ENCODE measurements at regions of chr4 and their contacts with region 1.

Region 1: GRCh38 chr4:142846729-142847596 is 862 bp upstream of the INPP4B start:
- DNase-seq: peak; percentile 60
- H3K4me3 Mint-ChIP-seq: peak overlapping the region; percentile 89
- H3K27ac Mint-ChIP-seq: peak overlapping the region; percentile 80
- H3K4me1 Mint-ChIP-seq: peaks cover 18% of the 10 kb centered on the region
- H3K27me3 Mint-ChIP-seq: peaks cover 22% of the 10 kb centered on the region

Region 2: GRCh38 chr4:141220655-141221605 is 1626.0 kb before region 1 on chr4 and contains the start of gene ZNF330:
- intact Hi-C with region 1: loop called (anchors 10 kb)
- DNase-seq: peak; percentile 83
- H3K4me3 Mint-ChIP-seq: peak within 1 kb of the TSS; percentile 93
- H3K27ac Mint-ChIP-seq: peak within 1 kb of the TSS; percentile 98
- H3K4me1 Mint-ChIP-seq: peaks cover 47% of the 10 kb centered on the region
- H3K27me3 Mint-ChIP-seq: peaks cover 6% of the 10 kb centered on the region
- total RNA-seq, gene ZNF330: 57.8 and 62.9 TPM in 2 replicates

Region 3: DNA sequence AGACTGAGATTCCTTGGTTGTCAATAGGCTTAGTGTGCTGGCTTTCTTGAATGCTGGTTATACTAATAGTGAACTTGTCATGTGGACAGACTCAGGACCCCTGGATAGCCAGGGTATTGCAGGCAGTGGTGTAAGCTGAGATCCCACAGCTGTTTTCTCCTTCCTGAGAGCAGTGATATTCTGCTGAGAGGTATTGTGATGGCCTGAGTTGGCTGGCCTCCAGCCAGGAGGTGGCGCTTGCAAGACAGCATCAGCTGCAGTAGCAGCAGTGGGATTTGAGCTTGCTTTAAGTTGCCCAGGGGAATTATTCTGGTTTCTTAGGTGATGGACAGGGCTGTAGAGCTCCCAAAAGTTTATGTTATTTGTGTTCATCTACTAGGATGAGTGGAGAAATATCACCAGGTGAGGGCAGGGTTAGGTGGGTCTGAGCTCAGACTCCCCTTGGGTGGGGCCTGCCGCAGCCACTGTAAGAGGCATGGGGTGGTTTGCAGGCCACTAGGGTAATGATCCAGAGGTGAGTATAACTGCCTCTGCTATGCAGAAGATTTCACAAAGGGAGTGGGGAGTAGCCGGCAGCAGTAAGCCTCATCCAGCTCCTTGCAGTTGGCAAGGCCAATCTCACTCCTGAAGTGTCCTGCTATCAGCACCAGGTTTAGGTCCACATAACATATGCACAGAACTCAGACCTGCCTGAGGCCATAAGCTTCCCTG is 1144.3 kb before region 1 on chr4:
- intact Hi-C with region 1: loop called (anchors 1 kb)
- DNase-seq: no peak
- H3K4me3 Mint-ChIP-seq: no peak overlapping the region
- H3K27ac Mint-ChIP-seq: no peak overlapping the region
- H3K4me1 Mint-ChIP-seq: peaks cover 11% of the 10 kb centered on the region
- H3K27me3 Mint-ChIP-seq: peaks cover 6% of the 10 kb centered on the region

Region 4: DNA sequence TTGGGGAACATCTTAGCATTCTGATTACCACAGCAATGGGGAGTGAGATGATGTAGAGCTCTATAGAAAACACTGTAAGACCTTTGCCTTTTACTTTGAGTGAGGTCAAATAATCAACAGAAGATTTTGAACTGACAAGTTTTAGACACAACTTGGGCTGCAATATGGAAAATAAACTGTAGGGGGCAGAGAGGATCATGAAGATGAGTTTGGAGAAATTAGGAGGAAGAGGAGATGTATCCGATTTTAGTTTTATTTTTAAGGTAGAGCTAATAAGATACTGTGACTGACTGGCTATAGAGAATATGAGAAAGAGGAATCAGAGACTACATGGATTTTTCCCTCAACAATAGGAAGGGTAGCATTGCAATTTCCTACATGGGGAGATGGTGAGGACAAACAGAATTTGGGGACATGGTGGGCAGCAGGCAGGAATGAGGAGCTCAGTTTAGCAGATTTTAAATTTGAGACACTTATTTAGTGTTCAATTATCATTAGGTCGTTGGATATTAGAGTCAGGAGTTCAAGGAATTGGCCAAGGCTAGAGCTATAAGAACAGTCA is 564.0 kb before region 1 on chr4:
- intact Hi-C with region 1: loop called (anchors 1 kb)
- DNase-seq: no peak
- H3K4me3 Mint-ChIP-seq: no peak overlapping the region
- H3K27ac Mint-ChIP-seq: no peak overlapping the region
- H3K4me1 Mint-ChIP-seq: peaks cover 5% of the 10 kb centered on the region
- H3K27me3 Mint-ChIP-seq: no peaks in the 10 kb centered on the region

Region 5: DNA sequence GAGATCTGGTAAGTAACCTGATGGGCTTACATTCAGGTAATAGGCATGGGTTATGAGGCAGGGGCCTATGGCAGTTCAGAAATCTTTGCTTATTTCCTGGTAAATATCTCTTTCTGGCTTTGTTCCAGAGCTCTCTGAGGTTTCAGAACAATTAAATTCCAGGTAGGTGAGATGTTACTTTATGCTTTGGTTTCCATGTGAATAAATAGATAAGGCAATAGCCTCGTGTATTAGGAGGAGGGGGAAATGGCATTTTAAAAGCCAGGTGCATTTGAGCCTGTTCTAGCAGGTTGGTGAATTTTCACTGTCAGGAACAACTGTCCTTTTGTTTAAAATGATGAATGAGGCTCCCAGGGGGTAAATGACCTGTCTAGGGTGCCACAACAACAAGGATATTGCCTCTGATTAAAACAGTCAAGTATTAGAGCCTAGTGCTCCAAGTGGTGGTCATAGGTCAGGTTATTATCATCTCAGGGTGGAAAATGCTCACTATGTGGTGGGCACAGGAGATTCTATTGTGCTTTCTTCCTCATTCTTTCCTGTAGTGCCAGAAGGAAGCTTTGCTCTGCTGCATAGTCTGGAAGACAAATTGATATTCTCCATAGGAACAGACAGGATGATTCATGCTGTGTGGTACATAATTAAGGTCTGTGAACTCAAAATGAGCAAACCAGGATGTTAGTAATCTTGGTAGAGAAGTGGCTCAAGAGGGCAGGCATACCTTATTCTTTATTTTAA is 297.1 kb before region 1 on chr4:
- intact Hi-C with region 1: no loop called
- DNase-seq: no peak
- H3K4me3 Mint-ChIP-seq: no peak overlapping the region
- H3K27ac Mint-ChIP-seq: peak overlapping the region; percentile 10
- H3K4me1 Mint-ChIP-seq: peaks cover 41% of the 10 kb centered on the region
- H3K27me3 Mint-ChIP-seq: no peaks in the 10 kb centered on the region

Region 6: DNA sequence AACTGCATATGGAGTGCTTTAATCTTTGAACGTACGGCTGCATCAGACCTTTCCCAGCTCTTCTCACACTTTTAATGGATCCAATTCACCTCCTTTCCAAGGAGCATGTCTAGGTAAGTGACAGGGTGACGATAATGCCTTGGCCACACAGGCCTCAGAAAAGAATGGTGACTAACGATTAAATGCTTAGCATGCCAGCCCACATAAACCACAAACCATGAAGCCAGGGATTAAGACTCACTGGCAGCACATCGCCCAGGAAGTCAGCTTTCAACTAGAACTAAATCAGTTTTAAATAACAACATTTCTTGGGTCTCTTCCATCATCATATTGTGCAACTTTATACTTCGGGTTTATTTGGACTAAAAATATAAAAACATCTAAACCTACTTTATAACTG is 29.5 kb before region 1 on chr4:
- intact Hi-C with region 1: loop called (anchors 2 kb)
- DNase-seq: no peak
- H3K4me3 Mint-ChIP-seq: peak overlapping the region; percentile 6
- H3K27ac Mint-ChIP-seq: peak overlapping the region; percentile 61
- H3K4me1 Mint-ChIP-seq: peaks cover 21% of the 10 kb centered on the region
- H3K27me3 Mint-ChIP-seq: no peaks in the 10 kb centered on the region

Region 7: GRCh38 chr4:142861351-142861750 is 14.4 kb after region 1 on chr4:
- intact Hi-C with region 1: no loop called
- DNase-seq: no peak
- H3K4me3 Mint-ChIP-seq: no peak overlapping the region
- H3K27ac Mint-ChIP-seq: no peak overlapping the region
- H3K4me1 Mint-ChIP-seq: no peaks in the 10 kb centered on the region
- H3K27me3 Mint-ChIP-seq: peaks cover 10% of the 10 kb centered on the region

Measured in activated T-helper 1 cell treated with anti-CD3 and anti-CD28 coated beads, Interleukin-12 subunit alpha, Interleukin-12 subunit beta, Interleukin-2, Interleukin-4 antibody, amounts not matched to agents 30 ng/mL and 10 ng/mL and 1 ng/mL, durations not matched to agents 14 hours and 24 hours and 36 hours (primary cell).